Activated CD4-positive, alpha-beta T cell treated with anti-CD3 and anti-CD28 coated beads for 36 hours (primary cell): ENCODE measurements at regions of chr14 and their contacts with region 1.

Region 1: GRCh38 chr14:65412032-65412846 is at the start of gene FUT8:
- DNase-seq: peak; percentile 98
- ATAC-seq: peak; percentile 92
- H3K4me3 Mint-ChIP-seq: peak within 1 kb of the TSS; percentile 80
- H3K27ac Mint-ChIP-seq: peak within 1 kb of the TSS; percentile 88
- H3K4me1 Mint-ChIP-seq: peaks cover 31% of the 10 kb centered on the region
- H3K27me3 Mint-ChIP-seq: no peaks in the 10 kb centered on the region
- total RNA-seq, gene FUT8: 44.2 to 50.0 TPM

Region 2: DNA sequence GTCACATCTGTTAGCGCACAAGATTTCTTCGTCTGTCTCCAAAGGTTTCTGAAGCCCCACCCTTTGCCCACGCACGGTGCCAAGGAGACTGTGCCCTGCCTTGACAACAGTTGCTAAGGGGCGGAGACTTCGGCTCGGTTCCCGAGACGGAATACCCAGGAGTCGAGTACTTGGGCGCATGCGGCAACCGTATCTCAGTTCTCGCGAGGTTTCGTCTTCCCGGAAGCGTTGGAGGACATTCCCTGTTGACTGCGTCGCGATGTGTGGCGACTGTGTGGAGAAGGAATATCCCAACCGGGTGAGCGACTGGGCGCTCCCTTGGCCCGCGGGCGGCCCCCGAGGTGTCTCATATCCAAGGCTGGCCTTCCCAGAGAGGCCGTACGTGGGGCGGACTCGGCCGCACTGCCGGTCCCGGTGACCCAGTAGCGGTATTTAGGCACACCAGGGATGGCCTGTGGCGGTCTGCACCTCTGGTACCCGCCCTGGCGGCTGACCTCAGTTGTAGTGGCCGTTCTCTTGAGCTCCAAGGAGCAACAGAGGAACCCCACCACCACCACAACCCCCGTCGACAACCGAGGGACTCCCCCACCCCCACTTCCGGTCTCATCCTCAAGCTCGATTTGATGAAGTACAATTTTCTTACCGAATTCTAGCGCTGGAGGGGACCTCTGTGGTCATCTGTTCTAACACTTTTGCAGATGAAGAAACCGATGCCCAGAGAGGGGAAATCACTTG is 497.8 kb before region 1 on chr14 and contains the start of gene CHURC1:
- CTCF ChIA-PET with region 1: no interaction called
- POLR2A ChIA-PET with region 1: no interaction called
- intact Hi-C with region 1: loop called in 1 of 2 experiments (anchors 1 kb)
- DNase-seq: peak; percentile 98
- ATAC-seq: peak; percentile 96
- H3K4me3 Mint-ChIP-seq: peak within 1 kb of the TSS; percentile 89
- H3K27ac Mint-ChIP-seq: peak within 1 kb of the TSS; percentile 95
- H3K4me1 Mint-ChIP-seq: peaks cover 45% of the 10 kb centered on the region
- H3K27me3 Mint-ChIP-seq: no peaks in the 10 kb centered on the region
- total RNA-seq, gene CHURC1: 37.6 to 66.1 TPM

Region 3: GRCh38 chr14:65164068-65164824 is 248.0 kb before region 1 on chr14:
- CTCF ChIA-PET with region 1: interaction called, 16 read pairs
- POLR2A ChIA-PET with region 1: no interaction called
- intact Hi-C with region 1: loop called (anchors 1 kb)
- DNase-seq: peak; percentile 56
- ATAC-seq: peak; percentile 60
- H3K4me3 Mint-ChIP-seq: no peak overlapping the region
- H3K27ac Mint-ChIP-seq: no peak overlapping the region
- H3K4me1 Mint-ChIP-seq: peaks cover 14% of the 10 kb centered on the region
- H3K27me3 Mint-ChIP-seq: no peaks in the 10 kb centered on the region

Region 4: DNA sequence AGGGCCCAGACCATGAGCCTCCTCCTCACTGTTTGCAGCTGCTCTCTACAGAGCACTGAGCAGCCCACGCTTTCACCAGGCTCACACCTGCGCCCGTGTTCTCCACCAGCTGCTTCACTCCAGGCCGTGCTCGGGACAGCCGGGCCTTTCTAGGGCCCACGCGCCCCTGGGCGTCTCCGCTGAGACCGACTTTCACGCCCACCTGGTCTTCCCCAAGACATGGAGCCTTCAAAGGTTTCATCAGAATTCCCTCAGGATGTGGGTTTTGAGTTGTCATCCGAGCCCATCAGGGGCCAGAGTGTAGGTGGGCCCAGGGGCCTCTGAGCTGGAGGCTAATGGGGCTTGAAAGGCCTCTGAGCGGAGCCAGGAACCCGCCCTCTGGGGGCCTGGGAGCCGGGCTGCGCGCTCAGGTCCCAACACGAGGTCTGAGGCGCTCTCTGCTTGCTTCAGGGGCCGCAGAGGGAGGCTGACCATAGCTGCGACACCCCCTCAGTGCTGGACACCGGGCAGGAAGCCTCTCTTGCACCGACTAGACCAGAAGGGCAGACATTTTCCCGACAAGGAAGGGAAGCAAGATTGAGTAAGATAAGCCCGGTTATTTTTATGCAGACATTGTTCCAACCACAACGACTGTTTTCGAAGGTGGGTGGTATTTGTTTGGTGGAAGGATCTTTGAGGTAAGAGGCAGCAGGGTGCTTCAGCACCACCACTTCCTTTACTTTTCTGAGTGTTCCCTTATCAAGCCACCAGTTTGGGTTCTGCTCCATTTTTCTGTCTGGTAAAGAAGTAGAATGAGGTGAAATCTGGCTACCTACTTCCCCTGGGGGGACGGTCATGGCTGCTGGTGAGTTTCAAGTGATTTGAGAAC is 124.7 kb before region 1 on chr14:
- CTCF ChIA-PET with region 1: interaction called, 20 read pairs
- POLR2A ChIA-PET with region 1: interaction called, 5 read pairs
- intact Hi-C with region 1: loop called (anchors 1 kb)
- DNase-seq: peak; percentile 78
- ATAC-seq: peak; percentile 66
- H3K4me3 Mint-ChIP-seq: peak overlapping the region; percentile 65
- H3K27ac Mint-ChIP-seq: peak overlapping the region; percentile 98
- H3K4me1 Mint-ChIP-seq: peaks cover 70% of the 10 kb centered on the region
- H3K27me3 Mint-ChIP-seq: no peaks in the 10 kb centered on the region

Region 5: DNA sequence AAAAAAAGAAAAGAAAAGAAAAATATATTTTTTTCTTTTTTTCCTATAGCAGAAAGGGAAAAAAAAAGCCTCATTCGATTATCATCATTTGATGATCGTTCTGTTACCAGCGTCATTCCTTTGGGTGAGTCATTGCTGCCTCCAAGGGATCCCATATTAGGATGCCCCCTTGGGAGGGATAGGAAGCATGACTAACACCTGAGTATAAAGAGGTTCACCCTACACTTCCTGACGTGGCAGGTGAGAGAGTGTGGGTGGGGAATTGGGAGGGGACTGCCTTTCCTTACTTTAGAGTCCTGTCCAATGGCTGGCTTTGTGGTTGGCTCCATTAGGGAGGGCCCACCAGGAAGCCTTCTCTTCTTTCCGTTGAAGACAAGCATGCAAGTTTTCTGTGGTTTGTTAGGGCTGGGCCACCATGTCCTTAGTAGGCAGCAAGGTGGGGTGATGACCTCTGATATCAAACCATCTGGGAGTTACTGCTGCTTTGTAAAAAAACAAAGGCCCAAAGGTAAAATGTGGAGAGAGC is 55.8 kb before region 1 on chr14:
- CTCF ChIA-PET with region 1: interaction called, 3 read pairs
- POLR2A ChIA-PET with region 1: interaction called, 12 read pairs
- intact Hi-C with region 1: no loop called
- DNase-seq: peak; percentile 58
- ATAC-seq: peak; percentile 43
- H3K4me3 Mint-ChIP-seq: no peak overlapping the region
- H3K27ac Mint-ChIP-seq: peak overlapping the region; percentile 60
- H3K4me1 Mint-ChIP-seq: peaks cover 47% of the 10 kb centered on the region
- H3K27me3 Mint-ChIP-seq: no peaks in the 10 kb centered on the region

Region 6: GRCh38 chr14:65958664-65959562 is 546.7 kb after region 1 on chr14:
- CTCF ChIA-PET with region 1: interaction called, 66 read pairs
- POLR2A ChIA-PET with region 1: interaction called, 3 read pairs
- intact Hi-C with region 1: loop called (anchors 1 to 5 kb)
- DNase-seq: no peak
- ATAC-seq: no peak
- H3K4me3 Mint-ChIP-seq: no peak overlapping the region
- H3K27ac Mint-ChIP-seq: no peak overlapping the region
- H3K4me1 Mint-ChIP-seq: peaks cover 21% of the 10 kb centered on the region
- H3K27me3 Mint-ChIP-seq: no peaks in the 10 kb centered on the region